Caco-2 (cell line): ENCODE measurements at regions of chr13 and their contacts with region 1.

Region 1: GRCh38 chr13:51006067-51006845 is 96.7 kb downstream of the RNASEH2B start:
- DNase-seq: peak; percentile 60 to 75
- H3K4me3 ChIP-seq: no peak overlapping the region
- H3K4me3 Mint-ChIP-seq: no peak overlapping the region
- H3K27ac Mint-ChIP-seq: no peak overlapping the region
- H3K4me1 ChIP-seq: peaks cover 29% of the 10 kb centered on the region
- H3K4me1 Mint-ChIP-seq: no peaks in the 10 kb centered on the region
- H3K27me3 ChIP-seq: no peaks in the 10 kb centered on the region; the same call in 1 of the 2 replicates
- H3K27me3 Mint-ChIP-seq: no peaks in the 10 kb centered on the region
- CTCF ChIP-seq: no peak

Region 2: GRCh38 chr13:51044023-51044665 is 37.9 kb after region 1 on chr13:
- CTCF ChIA-PET with region 1: interaction called, 6 read pairs
- POLR2A ChIA-PET with region 1: no interaction called
- intact Hi-C with region 1: loop called (anchors 1 kb)
- DNase-seq: peak in 1 of 2 experiments; percentile 42
- H3K4me3 ChIP-seq: no peak overlapping the region
- H3K4me3 Mint-ChIP-seq: no peak overlapping the region
- H3K27ac Mint-ChIP-seq: no peak overlapping the region
- H3K4me1 ChIP-seq: no peaks in the 10 kb centered on the region
- H3K4me1 Mint-ChIP-seq: no peaks in the 10 kb centered on the region
- H3K27me3 ChIP-seq: no peaks in the 10 kb centered on the region
- H3K27me3 Mint-ChIP-seq: no peaks in the 10 kb centered on the region
- CTCF ChIP-seq: peak in 1 of 2 experiments; percentile 72

Region 3: GRCh38 chr13:51291341-51291740 is 285.1 kb after region 1 on chr13:
- CTCF ChIA-PET with region 1: no interaction called
- POLR2A ChIA-PET with region 1: no interaction called
- intact Hi-C with region 1: no loop called
- DNase-seq: peak in 1 of 2 experiments; percentile 14
- H3K4me3 ChIP-seq: no peak overlapping the region
- H3K4me3 Mint-ChIP-seq: no peak overlapping the region
- H3K27ac Mint-ChIP-seq: no peak overlapping the region
- H3K4me1 ChIP-seq: no peaks in the 10 kb centered on the region
- H3K4me1 Mint-ChIP-seq: peaks cover 10% of the 10 kb centered on the region
- H3K27me3 ChIP-seq: no peaks in the 10 kb centered on the region
- H3K27me3 Mint-ChIP-seq: no peaks in the 10 kb centered on the region
- CTCF ChIP-seq: no peak